Colonic mucosa (tissue), 4 donors: ENCODE measurements at regions of chr4 and their contacts with region 1.

Region 1: GRCh38 chr4:21765810-21766407 is 182.7 kb downstream of the KCNIP4 start:
- DNase-seq: peak; percentile 43
- H3K4me3 ChIP-seq: no peak overlapping the region
- H3K27ac ChIP-seq: no peak overlapping the region
- H3K4me1 ChIP-seq: no peaks in the 10 kb centered on the region
- H3K27me3 ChIP-seq: no peaks in the 10 kb centered on the region
- CTCF ChIP-seq: peak; percentile 81

Region 2: GRCh38 chr4:20778896-20779295 is 987.0 kb before region 1 on chr4:
- intact Hi-C with region 1: loop called (anchors 5 kb)
- DNase-seq: no peak
- H3K4me3 ChIP-seq: no peak overlapping the region
- H3K27ac ChIP-seq: no peak overlapping the region
- H3K4me1 ChIP-seq: no peaks in the 10 kb centered on the region
- H3K27me3 ChIP-seq: no peaks in the 10 kb centered on the region
- CTCF ChIP-seq: no peak

Region 3: GRCh38 chr4:21514022-21514694 is 251.8 kb before region 1 on chr4:
- intact Hi-C with region 1: loop called (anchors 2 kb)
- DNase-seq: no peak
- H3K4me3 ChIP-seq: no peak overlapping the region
- H3K27ac ChIP-seq: no peak overlapping the region
- H3K4me1 ChIP-seq: no peaks in the 10 kb centered on the region
- H3K27me3 ChIP-seq: no peaks in the 10 kb centered on the region
- CTCF ChIP-seq: no peak